ENCODE measurements at regions of chr1 and their contacts with region 1.

Region 1: GRCh38 chr1:212477014-212477679 is 44.4 kb downstream of the NENF start:
- DNase-seq: peak; percentile 96
- H3K4me3 Mint-ChIP-seq: no peak overlapping the region
- H3K27ac Mint-ChIP-seq: peak overlapping the region; percentile 46
- H3K4me1 Mint-ChIP-seq: peaks cover 17% of the 10 kb centered on the region
- H3K27me3 Mint-ChIP-seq: no peaks in the 10 kb centered on the region
- CTCF ChIP-seq: peak; percentile 99

Region 2: DNA sequence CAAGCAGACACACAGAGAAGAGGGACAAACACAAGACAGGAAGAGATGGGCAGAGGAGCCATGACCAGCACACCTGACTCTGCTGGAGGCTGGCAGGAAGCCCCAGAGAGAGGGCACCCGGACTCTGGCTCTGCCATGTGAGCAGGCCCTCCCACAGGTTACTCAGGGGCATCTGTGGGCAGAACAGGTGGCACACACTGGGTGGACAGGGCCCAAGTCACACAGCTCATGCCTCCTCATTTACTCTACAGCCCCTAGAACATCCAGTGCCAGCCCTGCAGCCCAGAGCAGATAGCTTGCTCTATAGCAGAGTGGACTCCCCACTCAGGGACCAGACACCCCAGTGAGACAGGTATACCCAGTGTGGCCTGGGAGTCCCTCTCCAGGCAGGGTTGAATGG is 91.1 kb before region 1 on chr1:
- CTCF ChIA-PET with region 1: no interaction called
- POLR2A ChIA-PET with region 1: no interaction called
- intact Hi-C with region 1: no loop called
- DNase-seq: no peak
- H3K4me3 Mint-ChIP-seq: no peak overlapping the region
- H3K27ac Mint-ChIP-seq: no peak overlapping the region
- H3K4me1 Mint-ChIP-seq: no peaks in the 10 kb centered on the region
- H3K27me3 Mint-ChIP-seq: no peaks in the 10 kb centered on the region
- CTCF ChIP-seq: no peak

Region 3: DNA sequence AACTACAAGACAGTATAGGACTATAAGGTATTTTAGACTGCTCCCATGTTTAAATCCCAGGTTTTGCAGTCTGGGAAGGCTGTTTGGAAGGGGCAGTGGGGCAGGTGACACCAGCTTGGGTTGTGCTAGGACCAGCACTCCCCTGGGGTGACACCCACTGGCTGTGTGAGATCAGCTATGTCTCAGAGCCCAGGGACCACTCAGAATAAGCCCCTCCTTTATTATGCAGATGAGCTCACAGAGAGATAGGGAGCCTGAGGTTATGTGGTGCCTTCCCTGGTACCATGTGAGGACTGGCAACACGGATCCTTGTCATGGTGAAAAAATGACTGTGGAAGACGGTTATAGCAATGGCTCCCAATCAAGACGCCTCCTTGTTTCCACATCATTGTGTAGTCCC is 26.6 kb after region 1 on chr1:
- CTCF ChIA-PET with region 1: interaction called, 43 read pairs
- POLR2A ChIA-PET with region 1: no interaction called
- intact Hi-C with region 1: no loop called
- DNase-seq: no peak
- H3K4me3 Mint-ChIP-seq: no peak overlapping the region
- H3K27ac Mint-ChIP-seq: no peak overlapping the region
- H3K4me1 Mint-ChIP-seq: peaks cover 9% of the 10 kb centered on the region
- H3K27me3 Mint-ChIP-seq: no peaks in the 10 kb centered on the region
- CTCF ChIP-seq: no peak

Region 4: DNA sequence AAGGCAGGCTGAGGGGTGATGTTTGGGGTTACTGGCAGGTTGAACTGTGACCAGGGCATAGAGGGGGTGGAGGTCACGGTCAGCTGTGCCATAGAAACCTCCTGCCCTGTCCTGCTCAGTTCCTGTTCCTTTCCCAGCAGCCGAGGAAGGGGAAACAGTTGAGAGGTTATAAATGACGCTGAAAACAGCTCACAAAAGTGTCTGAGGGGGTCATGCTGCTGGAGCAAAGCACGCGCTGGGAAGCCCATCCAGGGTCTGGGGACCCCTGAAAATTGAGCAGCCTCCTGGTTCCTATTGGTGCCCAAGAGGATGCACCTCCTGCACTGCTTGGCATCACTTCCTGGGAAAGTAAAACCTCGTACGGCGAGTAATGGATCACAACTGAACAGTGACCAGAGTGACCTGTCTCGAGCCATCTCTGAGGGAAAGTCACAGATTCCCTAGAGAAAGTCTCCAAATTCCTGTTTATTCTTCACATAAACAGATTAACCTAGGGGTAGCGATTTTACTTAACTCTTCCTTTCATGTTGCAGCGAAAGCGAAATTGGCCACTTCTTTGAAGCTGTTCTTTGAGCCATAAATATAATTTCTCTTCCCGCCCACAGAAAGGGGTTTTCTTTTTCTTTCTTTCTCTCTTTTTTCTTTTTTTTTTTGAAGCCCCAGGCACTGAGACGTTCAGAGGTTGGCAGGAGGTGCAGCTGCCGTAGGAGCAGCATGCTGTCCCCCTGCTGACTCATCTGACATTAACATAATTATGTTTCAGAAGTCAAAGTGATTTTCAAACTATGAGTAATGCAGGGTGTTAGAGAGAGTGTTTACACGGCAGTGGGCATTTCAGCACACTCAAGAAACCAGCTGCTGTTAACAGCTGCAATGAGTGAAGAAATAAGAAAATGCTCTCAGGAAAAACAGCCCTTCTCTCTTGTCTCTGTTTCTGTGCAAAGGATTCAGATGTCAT is 89.7 kb after region 1 on chr1:
- CTCF ChIA-PET with region 1: interaction called, 30 read pairs
- POLR2A ChIA-PET with region 1: interaction called, 17 read pairs
- intact Hi-C with region 1: loop called (anchors 1 kb)
- DNase-seq: peak; percentile 94
- H3K4me3 Mint-ChIP-seq: peak overlapping the region; percentile 72
- H3K27ac Mint-ChIP-seq: peak overlapping the region; percentile 78
- H3K4me1 Mint-ChIP-seq: peaks cover 17% of the 10 kb centered on the region
- H3K27me3 Mint-ChIP-seq: no peaks in the 10 kb centered on the region
- CTCF ChIP-seq: no peak

Region 5: GRCh38 chr1:212621951-212622305 is 144.8 kb after region 1 on chr1:
- CTCF ChIA-PET with region 1: interaction called, 33 read pairs
- POLR2A ChIA-PET with region 1: interaction called, 5 read pairs
- intact Hi-C with region 1: loop called (anchors 1 kb)
- DNase-seq: no peak
- H3K4me3 Mint-ChIP-seq: no peak overlapping the region
- H3K27ac Mint-ChIP-seq: no peak overlapping the region
- H3K4me1 Mint-ChIP-seq: no peaks in the 10 kb centered on the region
- H3K27me3 Mint-ChIP-seq: peaks cover 30% of the 10 kb centered on the region
- CTCF ChIP-seq: no peak

Region 6: GRCh38 chr1:212699104-212699624 is 222.0 kb after region 1 on chr1:
- CTCF ChIA-PET with region 1: interaction called, 11 read pairs
- POLR2A ChIA-PET with region 1: no interaction called
- intact Hi-C with region 1: no loop called
- DNase-seq: peak; percentile 59
- H3K4me3 Mint-ChIP-seq: peak overlapping the region; percentile 71
- H3K27ac Mint-ChIP-seq: no peak overlapping the region
- H3K4me1 Mint-ChIP-seq: peaks cover 12% of the 10 kb centered on the region
- H3K27me3 Mint-ChIP-seq: peaks cover 62% of the 10 kb centered on the region
- CTCF ChIP-seq: peak; percentile 91

Region 7: GRCh38 chr1:212760126-212760823 is 283.1 kb after region 1 on chr1:
- CTCF ChIA-PET with region 1: interaction called, 13 read pairs
- POLR2A ChIA-PET with region 1: interaction called, 4 read pairs
- intact Hi-C with region 1: no loop called
- DNase-seq: peak; percentile 57
- H3K4me3 Mint-ChIP-seq: no peak overlapping the region
- H3K27ac Mint-ChIP-seq: no peak overlapping the region
- H3K4me1 Mint-ChIP-seq: no peaks in the 10 kb centered on the region
- H3K27me3 Mint-ChIP-seq: no peaks in the 10 kb centered on the region
- CTCF ChIP-seq: peak; percentile 82

Region 8: GRCh38 chr1:212987702-212988322 is 510.7 kb after region 1 on chr1:
- CTCF ChIA-PET with region 1: interaction called, 57 read pairs
- POLR2A ChIA-PET with region 1: interaction called, 3 read pairs
- intact Hi-C with region 1: no loop called
- DNase-seq: peak; percentile 74
- H3K4me3 Mint-ChIP-seq: no peak overlapping the region
- H3K27ac Mint-ChIP-seq: peak overlapping the region; percentile 22
- H3K4me1 Mint-ChIP-seq: peaks cover 9% of the 10 kb centered on the region
- H3K27me3 Mint-ChIP-seq: no peaks in the 10 kb centered on the region
- CTCF ChIP-seq: no peak

Measured in MCF 10A (cell line).